Dorsolateral prefrontal cortex (tissue), 120 donors: ENCODE measurements at regions of chr12 and their contacts with region 1.

Region 1: GRCh38 chr12:32541851-32542258 is 137.2 kb upstream of the DNM1L start:
- DNase-seq: no peak
- H3K4me3 ChIP-seq: peak overlapping the region in 7 of 59 donors; percentile 0 to 33 (median 15)
- H3K27ac ChIP-seq: peak overlapping the region in 57 of 59 donors; percentile 9 to 97 (median 88)
- H3K27me3 ChIP-seq: no peaks in the 10 kb centered on the region
- CTCF ChIP-seq: peak in 1 of 56 donors; percentile 4

Region 2: DNA sequence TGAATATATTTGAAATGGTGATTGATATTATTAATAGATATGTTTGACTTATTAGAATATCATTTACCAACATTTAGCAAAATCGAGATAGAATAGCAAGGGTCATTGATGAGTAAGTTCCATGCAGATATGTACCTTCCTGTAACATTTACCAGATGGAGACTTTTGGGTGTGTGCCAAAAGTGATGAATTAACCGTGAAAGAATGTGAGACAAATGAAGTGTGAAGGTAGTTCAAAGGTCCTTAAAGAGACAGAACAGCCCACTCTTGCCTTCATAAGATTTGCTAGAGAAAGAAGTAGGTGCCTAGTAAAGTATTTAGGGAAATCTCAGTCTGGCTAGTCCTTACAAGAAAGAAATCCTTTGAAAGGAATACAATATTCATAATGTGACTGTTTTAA is 97.0 kb before region 1 on chr12:
- intact Hi-C with region 1: no loop called
- DNase-seq: no peak
- H3K4me3 ChIP-seq: no peak overlapping the region
- H3K27ac ChIP-seq: no peak overlapping the region
- H3K27me3 ChIP-seq: no peaks in the 10 kb centered on the region
- CTCF ChIP-seq: no peak

Region 3: GRCh38 chr12:32501835-32502333 is 40.0 kb before region 1 on chr12:
- intact Hi-C with region 1: loop called in 1 of 2 experiments (anchors 5 kb)
- DNase-seq: peak in 9 of 10 donors; percentile 48 to 78 (median 61)
- H3K4me3 ChIP-seq: peak overlapping the region; percentile 29 to 76 (median 59)
- H3K27ac ChIP-seq: peak overlapping the region in 58 of 59 donors; percentile 24 to 87 (median 74)
- H3K27me3 ChIP-seq: no peaks in the 10 kb centered on the region
- CTCF ChIP-seq: no peak

Region 4: DNA sequence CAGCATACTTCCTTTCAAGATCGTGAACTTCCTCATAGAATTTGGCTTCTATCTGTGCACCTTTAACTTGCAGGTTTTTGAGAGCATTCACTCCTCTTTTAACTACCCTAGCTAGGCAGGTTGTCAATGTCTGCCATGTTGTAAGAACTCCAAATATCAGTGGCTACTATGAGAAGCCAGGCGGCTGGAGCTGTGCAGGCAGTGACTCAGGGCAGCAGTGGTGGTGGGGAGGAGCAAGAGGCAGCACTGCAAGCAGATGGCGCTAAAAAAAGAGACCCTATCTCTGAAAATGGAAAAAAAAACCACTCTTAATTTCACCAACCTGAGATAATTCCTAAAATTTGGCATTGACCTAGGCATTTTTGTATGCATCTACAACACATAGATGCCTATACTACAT is 185.4 kb after region 1 on chr12:
- intact Hi-C with region 1: no loop called
- DNase-seq: no peak
- H3K4me3 ChIP-seq: no peak overlapping the region
- H3K27ac ChIP-seq: no peak overlapping the region
- H3K27me3 ChIP-seq: no peaks in the 10 kb centered on the region
- CTCF ChIP-seq: no peak

Region 5: GRCh38 chr12:33330937-33331336 is 789.1 kb after region 1 on chr12:
- intact Hi-C with region 1: no loop called
- DNase-seq: no peak
- H3K4me3 ChIP-seq: no peak overlapping the region
- H3K27ac ChIP-seq: no peak overlapping the region
- H3K27me3 ChIP-seq: no peaks in the 10 kb centered on the region
- CTCF ChIP-seq: no peak